Calu3 (cell line): ENCODE measurements at regions of chr14 and their contacts with region 1.

Region 1: DNA sequence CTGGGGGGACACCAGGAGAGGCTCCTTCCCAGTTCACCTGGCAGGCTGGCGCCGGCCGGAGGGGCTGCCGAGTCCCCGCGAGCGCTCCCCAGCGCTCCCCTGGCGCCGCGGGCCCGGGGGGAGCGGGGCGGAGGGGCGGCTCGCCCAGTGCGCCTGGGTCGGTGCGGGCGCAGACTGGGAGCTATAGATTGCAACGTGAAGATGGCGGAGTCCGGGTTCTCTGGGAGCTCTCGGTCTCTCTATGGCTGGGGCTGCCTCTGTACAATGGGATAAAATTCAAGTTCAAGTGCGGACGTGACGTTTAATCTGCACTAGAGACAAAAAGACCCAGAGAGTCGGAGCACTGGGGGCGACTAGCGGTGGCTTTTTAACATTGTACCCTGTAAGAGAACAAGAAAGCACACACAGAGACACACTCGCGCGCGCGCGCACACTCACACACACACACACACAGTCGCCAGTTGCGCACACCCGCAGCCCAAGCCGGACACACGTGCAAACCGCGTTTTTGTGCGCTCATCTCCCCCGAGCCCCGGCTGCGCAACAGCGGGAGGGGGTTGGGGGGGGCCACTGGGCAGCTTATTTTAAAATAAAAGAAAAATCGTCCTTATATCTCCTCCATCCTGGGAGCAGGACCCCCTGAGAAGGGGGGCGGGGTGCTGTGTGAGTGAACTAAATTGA is at the start of gene BCL11B:
- DNase-seq: peak; percentile 70
- H3K4me3 Mint-ChIP-seq: peak within 1 kb of the TSS; percentile 70
- H3K27ac Mint-ChIP-seq: no peak within 1 kb of the TSS
- H3K4me1 Mint-ChIP-seq: peaks cover 23% of the 10 kb centered on the region
- H3K27me3 Mint-ChIP-seq: peaks cover 93% of the 10 kb centered on the region
- CTCF ChIP-seq: peak; percentile 48
- total RNA-seq, gene BCL11B: 0.24 and 0.59 TPM in 2 replicates

Region 2: GRCh38 chr14:99234961-99235571 is 37.0 kb before region 1 on chr14:
- CTCF ChIA-PET with region 1: no interaction called
- intact Hi-C with region 1: no loop called
- DNase-seq: no peak
- H3K4me3 Mint-ChIP-seq: no peak overlapping the region
- H3K27ac Mint-ChIP-seq: no peak overlapping the region
- H3K4me1 Mint-ChIP-seq: no peaks in the 10 kb centered on the region
- H3K27me3 Mint-ChIP-seq: no peaks in the 10 kb centered on the region
- CTCF ChIP-seq: no peak

Region 3: GRCh38 chr14:99287269-99287942 is 15.3 kb after region 1 on chr14:
- CTCF ChIA-PET with region 1: interaction called, 11 read pairs
- intact Hi-C with region 1: no loop called
- DNase-seq: no peak
- H3K4me3 Mint-ChIP-seq: no peak overlapping the region
- H3K27ac Mint-ChIP-seq: no peak overlapping the region
- H3K4me1 Mint-ChIP-seq: no peaks in the 10 kb centered on the region
- H3K27me3 Mint-ChIP-seq: peaks cover 31% of the 10 kb centered on the region
- CTCF ChIP-seq: no peak

Region 4: GRCh38 chr14:99318091-99318958 is 46.2 kb after region 1 on chr14:
- CTCF ChIA-PET with region 1: interaction called, 13 read pairs
- intact Hi-C with region 1: loop called (anchors 1 kb)
- DNase-seq: peak; percentile 52
- H3K4me3 Mint-ChIP-seq: no peak overlapping the region
- H3K27ac Mint-ChIP-seq: no peak overlapping the region
- H3K4me1 Mint-ChIP-seq: peaks cover 41% of the 10 kb centered on the region
- H3K27me3 Mint-ChIP-seq: no peaks in the 10 kb centered on the region
- CTCF ChIP-seq: no peak

Region 5: GRCh38 chr14:99415496-99416281 is 143.6 kb after region 1 on chr14:
- CTCF ChIA-PET with region 1: interaction called, 6 read pairs
- intact Hi-C with region 1: loop called (anchors 1 kb)
- DNase-seq: peak; percentile 54
- H3K4me3 Mint-ChIP-seq: no peak overlapping the region
- H3K27ac Mint-ChIP-seq: no peak overlapping the region
- H3K4me1 Mint-ChIP-seq: peaks cover 10% of the 10 kb centered on the region
- H3K27me3 Mint-ChIP-seq: no peaks in the 10 kb centered on the region
- CTCF ChIP-seq: peak; percentile 34